Mammary epithelial cell (primary cell): ENCODE measurements at regions of chr5 and their contacts with region 1.

Region 1: DNA sequence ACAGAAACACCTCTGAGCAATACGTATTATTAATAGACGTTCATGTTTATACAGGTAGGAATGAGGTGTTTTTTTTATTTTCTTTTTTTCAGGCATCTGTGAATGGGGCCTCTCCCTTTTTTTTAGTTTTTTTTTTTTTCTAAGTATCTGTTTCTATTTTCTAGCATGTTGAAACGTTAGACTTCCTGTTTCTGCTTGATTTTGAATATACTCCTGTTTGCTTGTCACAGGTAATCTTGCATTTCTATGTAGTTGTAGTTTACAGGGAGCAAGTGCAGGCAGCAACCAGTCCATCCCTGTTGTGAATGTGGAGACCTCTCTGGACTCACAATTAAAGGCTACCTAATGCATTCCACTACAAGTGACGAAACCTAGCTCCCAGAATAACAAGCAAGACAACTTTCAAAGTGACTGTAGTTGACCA is 22.8 kb upstream of the TNFAIP8 start:
- DNase-seq: peak; percentile 77
- H3K4me3 ChIP-seq: peak overlapping the region in 1 of 3 experiments; percentile 1
- H3K27ac ChIP-seq: peak overlapping the region; percentile 78
- H3K4me1 ChIP-seq: peaks cover 38% of the 10 kb centered on the region
- H3K27me3 ChIP-seq: no peaks in the 10 kb centered on the region
- CTCF ChIP-seq: no peak

Region 2: DNA sequence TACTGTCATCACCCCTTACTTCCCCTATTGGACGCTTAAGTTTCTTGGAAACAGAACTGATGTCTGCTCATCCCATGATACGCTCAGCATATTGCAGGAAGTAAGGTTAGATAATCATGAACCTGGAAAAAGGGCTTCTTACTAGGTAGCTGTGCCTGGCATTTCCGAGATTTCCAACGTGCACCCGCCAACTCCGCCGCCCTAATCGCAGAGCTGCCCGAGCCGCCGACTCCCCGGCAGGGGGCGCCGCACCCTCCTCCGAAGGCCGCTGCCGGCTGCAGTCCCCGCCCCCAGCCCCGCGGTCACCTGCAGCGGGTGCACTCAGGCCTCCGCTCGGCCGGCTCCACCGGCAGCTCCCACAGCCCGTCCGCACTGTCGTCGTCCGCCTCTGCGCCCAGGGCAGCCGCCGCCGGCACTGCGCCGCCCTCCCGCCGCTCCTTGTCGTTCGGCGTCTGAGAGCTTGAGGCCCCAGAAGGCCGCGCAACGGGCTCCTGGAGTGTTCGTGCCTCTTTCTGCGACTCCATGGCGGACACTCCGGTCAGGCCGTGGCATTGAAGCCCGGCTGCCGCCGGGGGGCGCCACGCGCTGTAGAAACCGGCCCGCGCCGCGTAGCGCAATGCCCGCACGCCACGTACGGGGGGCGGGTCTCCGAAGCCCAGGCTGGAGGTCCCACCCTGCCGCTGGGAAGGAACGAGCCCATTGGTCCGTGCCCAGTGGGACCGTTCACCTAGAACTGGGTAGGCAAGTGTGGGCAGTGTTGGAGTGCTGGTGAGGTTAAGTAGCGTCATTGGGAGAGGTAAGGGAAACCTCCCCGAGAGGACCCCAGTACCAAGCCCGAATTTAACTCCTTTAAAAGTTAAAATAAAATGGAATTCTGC is 344.8 kb before region 1 on chr5 and contains the start of gene DTWD2:
- CTCF ChIA-PET with region 1: no interaction called
- dilution Hi-C with region 1: no loop called
- in situ Hi-C with region 1: no loop called
- intact Hi-C with region 1: loop called (anchors 1 kb)
- DNase-seq: peak; percentile 94
- H3K4me3 ChIP-seq: peak within 1 kb of the TSS; percentile 62 to 71 (median 70)
- H3K27ac ChIP-seq: peak within 1 kb of the TSS; percentile 65
- H3K4me1 ChIP-seq: peaks cover 8% of the 10 kb centered on the region
- H3K27me3 ChIP-seq: no peaks in the 10 kb centered on the region
- CTCF ChIP-seq: peak; percentile 74 to 90
- total RNA-seq, gene DTWD2: 6.1 to 9.5 TPM

Region 3: GRCh38 chr5:119070828-119071572 is 262.0 kb before region 1 on chr5 and contains the start of gene DMXL1:
- CTCF ChIA-PET with region 1: no interaction called
- dilution Hi-C with region 1: no loop called
- in situ Hi-C with region 1: no loop called
- intact Hi-C with region 1: loop called (anchors 5 kb)
- DNase-seq: peak; percentile 99
- H3K4me3 ChIP-seq: peak within 1 kb of the TSS; percentile 94 to 98 (median 98)
- H3K27ac ChIP-seq: peak within 1 kb of the TSS; percentile 92
- H3K4me1 ChIP-seq: peaks cover 8% of the 10 kb centered on the region
- H3K27me3 ChIP-seq: no peaks in the 10 kb centered on the region
- CTCF ChIP-seq: no peak
- total RNA-seq, gene DMXL1: 26.0 to 62.2 TPM

Region 4: DNA sequence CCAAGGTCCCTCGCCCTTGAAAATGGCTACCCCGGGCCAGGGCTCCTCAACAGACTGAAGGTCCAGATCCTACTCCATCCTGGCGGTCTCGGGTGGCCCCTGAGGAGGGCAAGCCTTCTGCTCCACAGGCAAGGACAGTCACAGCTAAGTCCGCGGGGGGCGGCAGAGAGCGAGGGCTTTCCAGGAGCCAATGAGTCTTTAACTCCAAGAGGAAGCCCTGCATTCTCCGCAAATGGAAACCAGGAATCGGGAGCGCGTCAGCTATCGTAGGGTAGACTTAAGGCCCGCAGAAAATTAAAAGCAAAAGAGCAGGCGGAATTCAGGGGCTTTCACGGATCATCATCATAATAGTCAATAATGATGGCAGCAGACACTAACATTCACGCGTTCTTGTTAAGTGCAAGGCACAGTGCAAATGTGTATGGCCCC is 65.0 kb before region 1 on chr5:
- CTCF ChIA-PET with region 1: interaction called, 3 read pairs
- dilution Hi-C with region 1: loop called (anchors 5 kb)
- in situ Hi-C with region 1: no loop called
- intact Hi-C with region 1: loop called (anchors 1 kb)
- DNase-seq: peak; percentile 82
- H3K4me3 ChIP-seq: peak overlapping the region; percentile 60 to 83 (median 73)
- H3K27ac ChIP-seq: peak overlapping the region; percentile 76
- H3K4me1 ChIP-seq: peaks cover 13% of the 10 kb centered on the region
- H3K27me3 ChIP-seq: no peaks in the 10 kb centered on the region
- CTCF ChIP-seq: peak; percentile 22 to 34

Region 5: GRCh38 chr5:119315516-119315949 is 17.5 kb before region 1 on chr5:
- CTCF ChIA-PET with region 1: no interaction called
- dilution Hi-C with region 1: no loop called
- in situ Hi-C with region 1: no loop called
- intact Hi-C with region 1: loop called (anchors 1 kb)
- DNase-seq: peak; percentile 50
- H3K4me3 ChIP-seq: no peak overlapping the region
- H3K27ac ChIP-seq: peak overlapping the region; percentile 3
- H3K4me1 ChIP-seq: peaks cover 14% of the 10 kb centered on the region
- H3K27me3 ChIP-seq: no peaks in the 10 kb centered on the region
- CTCF ChIP-seq: peak; percentile 47 to 63

Region 6: GRCh38 chr5:119373449-119373858 is 40.5 kb after region 1 on chr5:
- CTCF ChIA-PET with region 1: no interaction called
- dilution Hi-C with region 1: no loop called
- in situ Hi-C with region 1: no loop called
- intact Hi-C with region 1: no loop called
- DNase-seq: no peak
- H3K4me3 ChIP-seq: no peak overlapping the region
- H3K27ac ChIP-seq: no peak overlapping the region
- H3K4me1 ChIP-seq: peaks cover under 1% of the 10 kb centered on the region
- H3K27me3 ChIP-seq: no peaks in the 10 kb centered on the region
- CTCF ChIP-seq: no peak

Region 7: GRCh38 chr5:119400245-119400644 is 67.3 kb after region 1 on chr5:
- CTCF ChIA-PET with region 1: no interaction called
- dilution Hi-C with region 1: loop called (anchors 5 kb)
- in situ Hi-C with region 1: loop called in 1 of 2 experiments (anchors 10 kb)
- intact Hi-C with region 1: no loop called
- DNase-seq: peak; percentile 89
- H3K4me3 ChIP-seq: no peak overlapping the region
- H3K27ac ChIP-seq: no peak overlapping the region
- H3K4me1 ChIP-seq: peaks cover 17% of the 10 kb centered on the region
- H3K27me3 ChIP-seq: no peaks in the 10 kb centered on the region
- CTCF ChIP-seq: no peak

Region 8: GRCh38 chr5:119897537-119898370 is 564.8 kb after region 1 on chr5:
- CTCF ChIA-PET with region 1: no interaction called
- dilution Hi-C with region 1: no loop called
- in situ Hi-C with region 1: no loop called
- intact Hi-C with region 1: no loop called
- DNase-seq: peak; percentile 52
- H3K4me3 ChIP-seq: no peak overlapping the region
- H3K27ac ChIP-seq: no peak overlapping the region
- H3K4me1 ChIP-seq: no peaks in the 10 kb centered on the region
- H3K27me3 ChIP-seq: no peaks in the 10 kb centered on the region
- CTCF ChIP-seq: no peak

Region 9: GRCh38 chr5:120624021-120624563 is 1291.1 kb after region 1 on chr5:
- CTCF ChIA-PET with region 1: no interaction called
- dilution Hi-C with region 1: no loop called
- in situ Hi-C with region 1: no loop called
- intact Hi-C with region 1: no loop called
- DNase-seq: no peak
- H3K4me3 ChIP-seq: peak overlapping the region in 2 of 3 experiments; percentile 19 to 45
- H3K27ac ChIP-seq: peak overlapping the region; percentile 24
- H3K4me1 ChIP-seq: peaks cover 8% of the 10 kb centered on the region
- H3K27me3 ChIP-seq: no peaks in the 10 kb centered on the region
- CTCF ChIP-seq: no peak